K562 (cell line): ENCODE measurements at regions of chr10 and their contacts with region 1.

Region 1: GRCh38 chr10:86123715-86124114 is 242.9 kb downstream of the GRID1 start:
- DNase-seq: no peak
- ATAC-seq: no peak
- H3K4me3 ChIP-seq: no peak overlapping the region
- H3K27ac ChIP-seq: no peak overlapping the region
- H3K4me1 ChIP-seq: no peaks in the 10 kb centered on the region
- H3K27me3 ChIP-seq: peaks cover 0 to 4% of the 10 kb centered on the region in 2 experiments; a peak in 1 of 5 replicates
- CTCF ChIP-seq: no peak
- EP300 ChIP-seq: no peak
- POLR2A ChIP-seq: no peak
- RAD21 ChIP-seq: no peak

Region 2: GRCh38 chr10:86100581-86101061 is 23.1 kb before region 1 on chr10:
- CTCF ChIA-PET with region 1: no interaction called
- POLR2A ChIA-PET with region 1: no interaction called
- in situ Hi-C with region 1: no loop called
- intact Hi-C with region 1: loop called (anchors 2 kb)
- DNase-seq: peak in 3 of 4 experiments; percentile 46 to 55 (median 51)
- ATAC-seq: peak; percentile 83
- H3K4me3 ChIP-seq: no peak overlapping the region
- H3K27ac ChIP-seq: no peak overlapping the region
- H3K4me1 ChIP-seq: no peaks in the 10 kb centered on the region
- H3K27me3 ChIP-seq: no peaks in the 10 kb centered on the region
- CTCF ChIP-seq: peak; percentile 54 to 59 (median 58); a peak in 5 of 6 replicates
- EP300 ChIP-seq: no peak
- POLR2A ChIP-seq: no peak
- RAD21 ChIP-seq: peak in 1 of 2 experiments; percentile 42; a peak in 2 of 4 replicates

Region 3: DNA sequence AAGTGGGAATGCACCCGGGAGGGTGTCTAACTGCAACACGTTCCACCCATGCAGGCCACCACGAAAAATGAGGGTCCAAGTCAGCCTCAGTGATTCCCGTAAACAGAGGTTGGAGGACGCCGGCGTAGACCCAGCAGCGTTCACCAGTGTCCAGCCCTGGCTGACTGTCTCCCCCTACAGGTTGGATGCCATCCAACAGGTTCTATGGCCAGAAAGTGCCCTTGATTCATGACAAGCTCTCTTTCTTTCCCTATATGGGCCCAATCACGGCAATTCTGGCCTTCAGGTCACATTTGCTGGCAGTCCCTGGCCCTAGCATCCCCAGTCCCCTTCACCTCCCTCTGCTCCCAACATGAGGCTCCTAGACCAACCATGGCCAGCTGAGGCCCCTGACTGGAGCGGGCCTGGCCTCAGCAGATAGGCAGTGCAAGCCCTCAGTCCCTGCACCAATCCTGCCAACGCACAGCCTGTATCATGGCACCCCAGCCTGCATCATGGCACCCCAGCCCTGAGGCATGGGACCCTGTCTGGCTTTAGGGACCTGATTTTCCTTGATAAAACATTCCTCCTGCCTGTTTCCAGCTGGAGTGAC is 15.4 kb after region 1 on chr10:
- CTCF ChIA-PET with region 1: no interaction called
- POLR2A ChIA-PET with region 1: no interaction called
- in situ Hi-C with region 1: no loop called
- intact Hi-C with region 1: no loop called
- DNase-seq: peak in 3 of 4 experiments; percentile 9 to 13 (median 11)
- ATAC-seq: peak; percentile 66
- H3K4me3 ChIP-seq: no peak overlapping the region
- H3K27ac ChIP-seq: no peak overlapping the region
- H3K4me1 ChIP-seq: no peaks in the 10 kb centered on the region
- H3K27me3 ChIP-seq: no peaks in the 10 kb centered on the region; a peak in 1 of 5 replicates
- CTCF ChIP-seq: peak; percentile 26 to 46 (median 36); a peak in 4 of 6 replicates
- EP300 ChIP-seq: no peak
- POLR2A ChIP-seq: no peak
- RAD21 ChIP-seq: no peak; a peak in 1 of 4 replicates

Region 4: DNA sequence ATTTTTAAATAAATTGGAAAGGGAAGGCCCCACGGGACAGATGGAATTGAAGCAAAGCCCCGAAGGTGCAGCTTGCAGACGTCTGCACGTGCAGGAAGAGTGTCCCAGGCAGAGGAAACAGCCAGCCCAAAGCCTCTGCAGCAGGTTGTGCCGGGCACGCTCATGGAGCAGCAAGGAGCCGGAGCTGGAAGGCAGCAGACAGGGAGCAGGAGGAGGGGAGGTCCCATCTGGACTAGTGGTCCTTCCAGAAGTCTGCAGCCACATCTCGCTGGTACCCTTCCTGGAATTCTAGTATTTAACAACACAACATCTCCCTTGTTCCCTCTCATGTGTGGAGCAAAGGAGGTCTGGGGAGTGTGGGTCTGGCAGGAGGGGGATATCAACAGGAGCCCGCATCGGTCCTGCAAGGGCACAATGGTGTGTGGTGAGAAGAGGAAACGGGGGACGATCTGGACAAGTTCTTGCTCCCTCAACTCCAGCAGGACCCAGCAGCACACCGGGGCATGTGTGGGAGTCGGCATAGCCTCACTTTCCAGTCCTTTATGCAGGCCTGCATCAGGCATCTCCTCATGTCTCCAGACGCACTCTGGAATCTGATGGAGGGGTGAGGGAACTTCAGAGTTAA is 73.6 kb after region 1 on chr10:
- CTCF ChIA-PET with region 1: no interaction called
- POLR2A ChIA-PET with region 1: no interaction called
- in situ Hi-C with region 1: no loop called
- intact Hi-C with region 1: no loop called
- DNase-seq: no peak
- ATAC-seq: no peak
- H3K4me3 ChIP-seq: no peak overlapping the region
- H3K27ac ChIP-seq: no peak overlapping the region
- H3K4me1 ChIP-seq: no peaks in the 10 kb centered on the region
- H3K27me3 ChIP-seq: no peaks in the 10 kb centered on the region
- CTCF ChIP-seq: no peak
- EP300 ChIP-seq: no peak
- POLR2A ChIP-seq: no peak
- RAD21 ChIP-seq: no peak

Region 5: DNA sequence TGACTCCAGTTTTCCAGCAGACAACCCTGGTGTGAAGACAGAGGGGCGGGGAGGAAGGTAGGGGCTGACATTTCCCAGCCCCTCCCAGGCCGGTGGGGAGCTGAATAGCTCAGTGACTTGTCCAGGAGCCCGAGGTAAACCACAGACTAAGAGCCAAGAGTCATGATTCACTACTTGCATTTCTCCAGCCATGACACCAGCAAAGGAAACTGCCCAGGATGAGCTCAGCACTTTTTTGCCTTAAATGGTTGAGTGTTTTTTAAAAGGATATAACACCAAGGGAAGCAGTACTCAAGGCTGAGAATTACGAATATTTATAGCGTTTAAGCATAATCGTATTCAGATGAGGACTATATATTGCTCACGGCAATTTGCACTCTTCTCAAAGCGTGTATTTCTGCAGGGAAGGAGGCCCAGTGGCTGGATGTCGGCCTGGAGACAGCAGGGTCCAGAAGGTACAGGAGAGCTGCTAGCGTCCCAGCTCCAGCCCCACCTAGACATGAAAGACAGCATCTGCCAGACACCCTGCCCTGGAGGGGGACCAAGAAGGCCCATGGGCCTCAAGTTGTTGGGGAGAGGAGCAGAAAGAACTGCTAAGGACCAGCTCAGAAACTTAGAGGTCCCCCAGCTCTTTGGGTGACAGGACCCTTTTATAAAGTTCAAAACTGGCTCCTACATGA is 101.5 kb after region 1 on chr10:
- CTCF ChIA-PET with region 1: no interaction called
- POLR2A ChIA-PET with region 1: no interaction called
- in situ Hi-C with region 1: no loop called
- intact Hi-C with region 1: no loop called
- DNase-seq: peak in 2 of 4 experiments; percentile 12 to 23
- ATAC-seq: peak; percentile 72
- H3K4me3 ChIP-seq: no peak overlapping the region
- H3K27ac ChIP-seq: no peak overlapping the region
- H3K4me1 ChIP-seq: no peaks in the 10 kb centered on the region
- H3K27me3 ChIP-seq: no peaks in the 10 kb centered on the region
- CTCF ChIP-seq: no peak
- EP300 ChIP-seq: no peak
- POLR2A ChIP-seq: no peak
- RAD21 ChIP-seq: no peak